Activated CD4-positive, alpha-beta T cell treated with anti-CD3 and anti-CD28 coated beads for 36 hours (primary cell): ENCODE measurements at regions of chr15 and their contacts with region 1.

Region 1: DNA sequence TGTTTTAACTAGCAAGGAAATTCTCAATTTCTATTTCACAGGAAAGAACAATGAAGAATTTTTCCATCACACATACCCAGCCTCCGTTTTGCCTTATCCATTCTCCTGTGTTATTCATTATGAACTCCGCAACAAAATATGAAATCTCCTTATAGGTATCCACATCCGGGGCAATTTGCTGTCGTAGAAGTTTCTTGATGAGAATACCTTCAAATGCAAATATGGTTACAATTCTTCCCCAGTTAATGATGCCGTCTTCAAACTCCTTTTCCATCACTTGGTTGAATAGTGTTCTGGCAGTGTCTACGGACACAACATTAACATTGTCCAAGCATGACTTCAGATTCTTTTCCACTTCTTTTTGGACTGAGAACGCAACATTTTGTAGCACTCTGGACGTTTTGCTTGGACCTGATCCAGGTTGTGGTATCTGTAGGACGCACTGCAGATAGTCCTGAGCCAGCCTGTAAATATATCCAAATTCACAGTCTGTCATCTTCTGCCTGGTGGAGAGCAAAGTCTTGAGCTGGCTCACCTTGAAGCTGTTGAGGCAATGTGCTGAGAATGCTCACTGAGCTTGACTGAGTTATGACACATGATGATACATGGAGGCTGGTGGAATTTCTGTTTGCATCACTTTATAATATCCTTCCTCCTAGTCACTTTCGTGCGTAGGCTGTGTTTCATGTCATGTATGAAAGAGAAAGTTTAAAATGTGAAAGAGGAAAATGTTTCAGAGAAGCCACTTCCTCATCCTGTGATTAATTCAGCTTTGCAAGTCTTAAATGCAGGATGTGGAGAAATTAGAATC is at the start of gene BCL2A1:
- DNase-seq: peak; percentile 83
- ATAC-seq: peak; percentile 72
- H3K4me3 Mint-ChIP-seq: peak within 1 kb of the TSS; percentile 92
- H3K27ac Mint-ChIP-seq: peak within 1 kb of the TSS; percentile 99
- H3K4me1 Mint-ChIP-seq: peaks cover 46% of the 10 kb centered on the region
- H3K27me3 Mint-ChIP-seq: no peaks in the 10 kb centered on the region
- total RNA-seq, gene BCL2A1: 82.2 to 103 TPM

Region 2: GRCh38 chr15:79310983-79311900 is 659.6 kb before region 1 on chr15 and contains the start of gene TMED3:
- CTCF ChIA-PET with region 1: no interaction called
- POLR2A ChIA-PET with region 1: no interaction called
- intact Hi-C with region 1: loop called in 1 of 2 experiments (anchors 5 kb)
- DNase-seq: peak; percentile 90
- ATAC-seq: peak; percentile 98
- H3K4me3 Mint-ChIP-seq: peak within 1 kb of the TSS; percentile 81
- H3K27ac Mint-ChIP-seq: peak within 1 kb of the TSS; percentile 77
- H3K4me1 Mint-ChIP-seq: peaks cover 28% of the 10 kb centered on the region
- H3K27me3 Mint-ChIP-seq: peaks cover 23% of the 10 kb centered on the region
- total RNA-seq, gene TMED3: 33.5 to 37.2 TPM

Region 3: DNA sequence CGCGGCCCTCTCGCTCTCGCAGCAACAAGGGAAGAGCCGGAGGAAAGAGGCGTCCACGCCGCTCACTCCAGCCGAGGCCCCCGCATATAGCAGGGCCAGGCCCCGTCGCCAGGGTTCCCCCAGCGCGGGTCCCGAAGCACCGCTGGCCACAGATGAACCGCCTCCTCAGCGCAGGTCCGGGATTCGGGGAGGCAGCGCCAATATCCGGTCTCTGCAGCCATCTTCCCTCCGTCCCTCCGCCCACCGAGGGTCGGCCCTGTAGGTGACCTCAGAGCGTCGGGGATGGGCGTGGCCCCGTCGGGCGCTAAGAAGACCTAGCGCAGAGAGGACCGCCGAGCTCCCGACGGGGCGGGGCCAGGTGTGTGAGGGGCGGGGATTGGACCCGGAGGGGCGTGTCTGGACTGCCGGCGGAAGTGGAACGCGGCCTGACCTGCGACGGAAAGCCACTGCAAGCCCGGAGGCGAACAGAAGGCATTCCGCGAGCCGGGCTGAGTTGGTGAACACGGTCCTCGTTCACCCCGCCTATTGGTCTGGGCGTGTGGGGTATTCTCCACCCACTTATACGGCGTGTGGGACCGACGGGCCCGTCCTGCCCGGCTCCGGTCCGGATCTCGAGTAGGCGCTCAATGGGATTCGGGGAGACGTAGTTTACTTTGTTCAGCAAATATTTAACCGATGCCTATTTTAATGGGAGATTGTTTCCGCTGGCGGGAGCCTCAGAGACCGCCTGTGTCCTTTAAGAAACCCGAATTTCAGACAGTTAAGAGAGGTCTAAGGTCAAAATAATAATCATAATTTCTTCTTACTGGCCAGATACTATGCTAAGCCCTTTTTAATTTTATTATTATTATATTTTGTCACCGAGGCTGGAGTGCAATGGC is 47.1 kb before region 1 on chr15:
- CTCF ChIA-PET with region 1: interaction called, 11 read pairs
- POLR2A ChIA-PET with region 1: interaction called, 48 read pairs
- intact Hi-C with region 1: loop called (anchors 1 kb)
- DNase-seq: peak; percentile 99
- ATAC-seq: peak; percentile 94
- H3K4me3 Mint-ChIP-seq: peak overlapping the region; percentile 89
- H3K27ac Mint-ChIP-seq: peak overlapping the region; percentile 94
- H3K4me1 Mint-ChIP-seq: peaks cover 23% of the 10 kb centered on the region
- H3K27me3 Mint-ChIP-seq: no peaks in the 10 kb centered on the region

Region 4: DNA sequence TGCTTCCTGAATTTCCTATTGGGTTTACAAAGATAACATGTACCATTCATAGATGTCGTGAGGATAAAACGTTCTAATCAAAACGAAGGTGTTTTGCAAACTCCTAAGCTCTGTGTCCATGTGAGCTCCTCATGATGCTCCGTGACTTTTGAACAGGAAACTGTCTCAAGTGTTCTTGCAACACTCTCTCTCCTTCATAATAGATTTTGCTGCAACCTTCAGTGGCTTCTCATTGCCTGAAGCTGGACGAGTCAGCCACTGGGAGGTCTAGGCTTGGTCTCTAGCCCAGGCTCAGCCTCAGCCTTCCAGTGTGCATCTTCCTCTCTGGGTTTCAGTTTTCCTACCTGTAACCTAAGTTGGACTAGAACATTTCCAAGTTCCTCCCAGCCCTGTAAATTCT is 18.9 kb after region 1 on chr15:
- CTCF ChIA-PET with region 1: interaction called, 14 read pairs
- POLR2A ChIA-PET with region 1: interaction called, 9 read pairs
- intact Hi-C with region 1: loop called (anchors 1 to 2 kb)
- DNase-seq: no peak
- ATAC-seq: no peak
- H3K4me3 Mint-ChIP-seq: no peak overlapping the region
- H3K27ac Mint-ChIP-seq: no peak overlapping the region
- H3K4me1 Mint-ChIP-seq: peaks cover 4% of the 10 kb centered on the region
- H3K27me3 Mint-ChIP-seq: no peaks in the 10 kb centered on the region

Region 5: GRCh38 chr15:80152180-80152845 is 181.5 kb after region 1 on chr15:
- CTCF ChIA-PET with region 1: no interaction called
- POLR2A ChIA-PET with region 1: interaction called, 3 read pairs
- intact Hi-C with region 1: loop called in 1 of 2 experiments (anchors 2 kb)
- DNase-seq: peak; percentile 98
- ATAC-seq: peak; percentile 81
- H3K4me3 Mint-ChIP-seq: peak overlapping the region; percentile 77
- H3K27ac Mint-ChIP-seq: peak overlapping the region; percentile 76
- H3K4me1 Mint-ChIP-seq: peaks cover 27% of the 10 kb centered on the region
- H3K27me3 Mint-ChIP-seq: no peaks in the 10 kb centered on the region